Head of caudate nucleus (tissue), 42 donors: ENCODE measurements at regions of chr15 and their contacts with region 1.

Region 1: GRCh38 chr15:48855501-48856440 is 22.2 kb upstream of the EID1 start:
- DNase-seq: peak in 14 of 42 donors; percentile 6 to 77 (median 25)

Region 2: GRCh38 chr15:48352474-48353072 is 503.2 kb before region 1 on chr15:
- intact Hi-C with region 1: loop called (anchors 10 kb)
- DNase-seq: peak in 41 of 42 donors; percentile 21 to 83 (median 61)

Region 3: GRCh38 chr15:49415638-49416037 is 559.9 kb after region 1 on chr15:
- intact Hi-C with region 1: no loop called
- DNase-seq: no peak